ENCODE measurements at regions of chr14 and their contacts with region 1.

Region 1: DNA sequence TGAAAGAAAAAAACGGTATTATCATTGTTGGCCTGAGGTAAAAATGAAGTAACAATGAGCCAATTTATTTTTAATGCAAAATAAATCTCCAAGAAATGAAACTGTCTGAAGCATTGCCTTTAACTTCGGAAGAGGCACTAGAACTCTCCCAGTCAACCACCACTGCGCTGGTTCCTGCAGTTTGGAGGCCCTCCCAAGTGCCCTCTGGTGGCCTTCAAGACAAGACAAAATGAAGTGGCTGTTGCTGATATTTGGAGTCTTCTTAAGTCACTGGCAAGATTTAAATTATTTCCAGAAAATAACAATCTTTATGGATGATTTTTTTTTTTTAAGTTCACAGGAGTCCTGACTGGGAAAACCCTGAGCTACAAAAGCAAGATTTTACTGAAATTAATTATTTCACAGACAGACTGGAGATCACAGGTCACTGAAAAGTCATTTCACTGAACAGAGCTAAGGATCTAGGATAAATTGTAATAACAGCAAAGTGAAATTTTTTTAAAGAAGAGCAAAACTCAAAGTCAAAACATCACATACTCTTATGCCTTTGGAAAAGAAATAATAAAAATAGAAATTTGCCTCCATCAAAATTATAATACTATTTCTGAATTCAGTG is 58.2 kb downstream of the DICER1 start:
- DNase-seq: peak; percentile 85
- H3K4me3 ChIP-seq: no peak overlapping the region
- H3K27ac ChIP-seq: no peak overlapping the region
- H3K4me1 ChIP-seq: peaks cover 0 to 77% (median 43%) of the 10 kb centered on the region in 4 donors
- H3K27me3 ChIP-seq: no peaks in the 10 kb centered on the region
- CTCF ChIP-seq: peak; percentile 54 to 74 (median 66)
- EP300 ChIP-seq: no peak
- POLR2A ChIP-seq: no peak

Region 2: GRCh38 chr14:94816113-94816512 is 283.0 kb before region 1 on chr14:
- intact Hi-C with region 1: loop called (anchors 2 kb)
- DNase-seq: no peak
- H3K4me3 ChIP-seq: no peak overlapping the region
- H3K27ac ChIP-seq: no peak overlapping the region
- H3K4me1 ChIP-seq: no peaks in the 10 kb centered on the region
- H3K27me3 ChIP-seq: no peaks in the 10 kb centered on the region
- CTCF ChIP-seq: peak in 2 of 4 experiments; percentile 9 to 33
- EP300 ChIP-seq: no peak
- POLR2A ChIP-seq: no peak

Region 3: GRCh38 chr14:94936401-94936892 is 162.6 kb before region 1 on chr14:
- intact Hi-C with region 1: loop called (anchors 5 kb)
- DNase-seq: peak; percentile 94
- H3K4me3 ChIP-seq: peak overlapping the region; percentile 21 to 44 (median 41)
- H3K27ac ChIP-seq: peak overlapping the region; percentile 90 to 95 (median 92)
- H3K4me1 ChIP-seq: peaks cover 0 to 59% (median 53%) of the 10 kb centered on the region in 4 donors
- H3K27me3 ChIP-seq: no peaks in the 10 kb centered on the region
- CTCF ChIP-seq: no peak
- EP300 ChIP-seq: peak in 2 of 4 donors; percentile 4 to 40
- POLR2A ChIP-seq: no peak

Region 4: DNA sequence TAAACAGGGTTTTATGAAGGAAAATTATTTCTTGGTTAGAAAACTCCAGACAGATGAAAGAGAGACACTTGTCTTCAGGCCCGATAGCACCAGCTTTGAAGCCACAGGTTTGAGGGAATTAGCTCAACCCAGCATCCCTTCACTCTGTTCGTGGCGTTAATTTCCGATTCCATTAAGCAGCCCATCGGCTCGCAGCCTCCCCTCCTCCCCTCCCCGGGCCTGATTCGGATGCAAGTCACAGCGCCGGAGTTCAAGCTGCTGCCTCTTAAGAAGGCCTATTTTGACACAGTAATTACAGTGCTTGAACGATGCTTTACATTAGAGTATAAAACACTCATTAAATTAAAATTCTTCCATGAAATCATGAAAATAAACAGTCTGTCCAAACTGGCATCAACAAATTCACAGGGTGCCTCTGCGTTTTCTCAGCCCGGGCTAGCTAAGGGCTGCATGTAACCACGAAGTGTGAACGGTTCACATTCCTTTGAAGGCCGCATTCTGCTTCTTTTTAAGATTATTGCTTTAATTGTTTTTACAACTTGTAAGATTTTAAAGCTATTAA is 87.6 kb before region 1 on chr14:
- intact Hi-C with region 1: loop called (anchors 5 kb)
- DNase-seq: peak; percentile 75
- H3K4me3 ChIP-seq: peak overlapping the region in 2 of 4 donors; percentile 6 to 15
- H3K27ac ChIP-seq: peak overlapping the region; percentile 6 to 76 (median 68)
- H3K4me1 ChIP-seq: peaks cover 0 to 50% (median 43%) of the 10 kb centered on the region in 4 donors
- H3K27me3 ChIP-seq: no peaks in the 10 kb centered on the region
- CTCF ChIP-seq: no peak
- EP300 ChIP-seq: peak in 2 of 4 donors; percentile 58 to 68
- POLR2A ChIP-seq: no peak

Region 5: GRCh38 chr14:95033851-95034632 is 65.0 kb before region 1 on chr14:
- intact Hi-C with region 1: no loop called
- DNase-seq: peak; percentile 40
- H3K4me3 ChIP-seq: no peak overlapping the region
- H3K27ac ChIP-seq: no peak overlapping the region
- H3K4me1 ChIP-seq: no peaks in the 10 kb centered on the region
- H3K27me3 ChIP-seq: no peaks in the 10 kb centered on the region
- CTCF ChIP-seq: no peak
- EP300 ChIP-seq: no peak
- POLR2A ChIP-seq: no peak

Region 6: DNA sequence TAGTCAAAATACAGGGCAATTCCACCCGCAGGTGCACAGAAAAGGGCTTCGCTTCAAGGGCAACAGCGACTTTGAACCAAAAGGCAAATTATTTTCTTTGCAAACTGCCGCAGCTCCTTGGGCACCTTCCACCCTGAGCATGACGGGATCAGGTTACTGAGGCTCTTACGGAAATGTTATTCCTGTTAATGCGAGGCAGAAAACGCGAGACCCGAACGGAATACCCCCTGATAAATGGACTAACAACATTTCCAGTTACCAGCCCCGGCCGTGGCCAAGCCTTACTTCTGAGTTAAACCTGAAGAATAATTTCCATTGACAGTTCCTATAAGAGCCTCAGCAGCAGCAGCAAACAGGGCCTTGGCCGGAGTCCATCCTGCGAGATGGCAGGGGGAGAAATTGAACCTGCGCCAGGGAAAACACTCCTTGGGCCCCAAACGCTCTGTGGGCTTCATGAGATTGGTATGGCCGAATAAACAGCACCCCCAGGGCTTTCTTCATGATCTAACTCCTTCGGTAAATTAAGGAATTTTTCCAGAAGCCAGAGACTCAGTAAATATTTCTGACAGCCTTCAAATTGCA is 128.3 kb after region 1 on chr14:
- intact Hi-C with region 1: no loop called
- DNase-seq: no peak
- H3K4me3 ChIP-seq: no peak overlapping the region
- H3K27ac ChIP-seq: no peak overlapping the region
- H3K4me1 ChIP-seq: peaks cover 0 to 14% (median 13%) of the 10 kb centered on the region in 4 donors
- H3K27me3 ChIP-seq: no peaks in the 10 kb centered on the region
- CTCF ChIP-seq: no peak
- EP300 ChIP-seq: no peak
- POLR2A ChIP-seq: no peak

Region 7: DNA sequence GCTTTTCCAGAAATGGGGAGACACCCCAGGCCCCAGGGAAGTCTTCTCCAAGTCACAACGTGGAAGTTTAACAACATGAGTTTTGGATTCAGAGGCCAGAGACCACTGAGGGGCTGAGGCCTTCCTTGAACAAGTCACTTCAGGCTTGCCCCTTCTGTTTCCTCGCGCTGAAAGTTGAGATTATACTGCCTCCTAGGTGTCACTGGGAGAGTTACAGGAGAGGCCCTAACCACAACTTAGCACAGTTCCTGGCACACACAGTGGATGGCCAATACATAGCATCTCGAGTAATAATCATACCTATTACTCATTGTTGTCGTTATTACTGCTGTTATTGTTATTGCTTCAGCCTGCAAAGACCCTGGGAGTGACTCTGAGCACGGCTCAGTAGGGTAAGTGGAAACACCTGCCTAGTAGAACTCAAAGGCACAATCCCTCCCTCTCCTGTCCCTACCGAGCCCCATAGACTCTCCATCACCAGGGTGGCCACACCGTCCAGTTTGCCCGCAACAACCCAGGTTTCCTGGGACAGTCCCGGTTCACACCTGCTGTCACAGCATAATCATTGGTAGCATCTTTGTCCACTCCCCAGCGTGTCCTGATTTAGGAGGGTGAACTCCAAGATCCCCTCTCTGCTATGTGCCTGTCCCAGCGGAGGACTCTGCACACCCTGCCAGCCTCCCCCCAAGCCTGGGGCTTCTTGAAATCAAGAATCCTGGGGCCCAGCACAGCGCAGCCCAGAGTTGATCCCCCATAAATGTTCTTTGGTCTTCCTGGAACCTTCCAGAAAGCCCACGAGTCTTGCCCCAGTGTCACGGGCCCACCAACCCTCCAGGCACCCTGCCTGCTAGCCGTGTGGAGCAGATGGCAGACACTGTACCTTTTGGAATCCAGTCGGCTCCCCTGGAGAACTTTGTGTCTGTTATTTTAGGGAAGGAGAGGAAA is 332.4 kb after region 1 on chr14:
- intact Hi-C with region 1: loop called (anchors 10 kb)
- DNase-seq: no peak
- H3K4me3 ChIP-seq: no peak overlapping the region
- H3K27ac ChIP-seq: peak overlapping the region in 2 of 4 donors; percentile 47 to 57
- H3K4me1 ChIP-seq: peaks cover 0 to 11% (median 8%) of the 10 kb centered on the region in 4 donors
- H3K27me3 ChIP-seq: no peaks in the 10 kb centered on the region
- CTCF ChIP-seq: peak in 3 of 4 experiments; percentile 20 to 28 (median 21)
- EP300 ChIP-seq: no peak
- POLR2A ChIP-seq: no peak